ENCODE measurements at regions of chr22 and their contacts with region 1.

Region 1: GRCh38 chr22:22201185-22201929 is 43.2 kb upstream of the VPREB1 start:
- DNase-seq: peak; percentile 86
- ATAC-seq: peak; percentile 77
- H3K4me3 Mint-ChIP-seq: no peak overlapping the region
- H3K27ac Mint-ChIP-seq: no peak overlapping the region
- H3K4me1 Mint-ChIP-seq: no peaks in the 10 kb centered on the region
- H3K27me3 Mint-ChIP-seq: peaks cover 2% of the 10 kb centered on the region

Region 2: GRCh38 chr22:21972293-21972779 is 229.0 kb before region 1 on chr22:
- CTCF ChIA-PET with region 1: no interaction called
- POLR2A ChIA-PET with region 1: no interaction called
- intact Hi-C with region 1: no loop called
- DNase-seq: peak; percentile 72
- ATAC-seq: peak; percentile 63
- H3K4me3 Mint-ChIP-seq: no peak overlapping the region
- H3K27ac Mint-ChIP-seq: no peak overlapping the region
- H3K4me1 Mint-ChIP-seq: no peaks in the 10 kb centered on the region
- H3K27me3 Mint-ChIP-seq: no peaks in the 10 kb centered on the region

Region 3: DNA sequence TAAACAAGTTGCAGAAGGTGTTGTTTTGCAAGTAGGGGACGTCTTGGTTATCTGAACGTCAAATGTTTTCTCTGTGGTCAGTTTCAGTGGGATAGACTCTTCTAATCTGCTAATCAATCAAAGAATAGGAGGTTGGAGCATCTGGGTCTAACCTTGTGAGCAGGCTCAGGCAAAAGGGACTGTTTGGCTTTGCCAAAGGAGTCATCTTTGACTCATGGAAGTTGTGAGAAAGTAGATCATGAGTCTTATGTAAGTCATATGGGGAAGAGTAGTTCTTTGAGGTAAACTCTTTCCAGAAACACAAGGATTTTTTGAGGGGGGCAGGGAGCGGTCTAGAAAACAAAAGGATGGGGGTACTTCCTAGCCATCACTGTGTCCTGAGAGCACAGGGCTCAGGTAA is 191.7 kb before region 1 on chr22:
- CTCF ChIA-PET with region 1: no interaction called
- POLR2A ChIA-PET with region 1: no interaction called
- intact Hi-C with region 1: no loop called
- DNase-seq: no peak
- ATAC-seq: peak; percentile 44
- H3K4me3 Mint-ChIP-seq: no peak overlapping the region
- H3K27ac Mint-ChIP-seq: no peak overlapping the region
- H3K4me1 Mint-ChIP-seq: peaks cover 3% of the 10 kb centered on the region
- H3K27me3 Mint-ChIP-seq: peaks cover 19% of the 10 kb centered on the region

Region 4: DNA sequence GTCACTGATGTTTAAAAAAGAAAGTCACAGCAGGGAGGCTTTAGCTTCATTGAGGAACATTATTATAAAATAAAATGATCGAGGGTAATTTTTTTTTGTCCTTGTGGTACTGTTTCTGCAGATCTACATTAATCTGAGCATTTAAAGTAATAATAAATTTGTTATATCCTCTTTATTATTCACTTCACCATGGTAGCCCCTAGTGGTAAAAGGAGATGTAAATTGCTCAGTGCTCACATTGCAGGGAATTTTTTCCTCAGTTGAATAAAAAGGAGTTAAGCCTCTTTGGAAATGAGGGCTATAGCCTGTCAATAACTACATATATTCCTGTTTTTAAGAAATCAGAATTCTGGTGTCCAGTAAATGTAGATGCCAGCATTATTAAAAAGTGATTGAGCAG is 56.5 kb before region 1 on chr22:
- CTCF ChIA-PET with region 1: no interaction called
- POLR2A ChIA-PET with region 1: no interaction called
- intact Hi-C with region 1: no loop called
- DNase-seq: no peak
- ATAC-seq: no peak
- H3K4me3 Mint-ChIP-seq: no peak overlapping the region
- H3K27ac Mint-ChIP-seq: no peak overlapping the region
- H3K4me1 Mint-ChIP-seq: no peaks in the 10 kb centered on the region
- H3K27me3 Mint-ChIP-seq: peaks cover 40% of the 10 kb centered on the region

Region 5: DNA sequence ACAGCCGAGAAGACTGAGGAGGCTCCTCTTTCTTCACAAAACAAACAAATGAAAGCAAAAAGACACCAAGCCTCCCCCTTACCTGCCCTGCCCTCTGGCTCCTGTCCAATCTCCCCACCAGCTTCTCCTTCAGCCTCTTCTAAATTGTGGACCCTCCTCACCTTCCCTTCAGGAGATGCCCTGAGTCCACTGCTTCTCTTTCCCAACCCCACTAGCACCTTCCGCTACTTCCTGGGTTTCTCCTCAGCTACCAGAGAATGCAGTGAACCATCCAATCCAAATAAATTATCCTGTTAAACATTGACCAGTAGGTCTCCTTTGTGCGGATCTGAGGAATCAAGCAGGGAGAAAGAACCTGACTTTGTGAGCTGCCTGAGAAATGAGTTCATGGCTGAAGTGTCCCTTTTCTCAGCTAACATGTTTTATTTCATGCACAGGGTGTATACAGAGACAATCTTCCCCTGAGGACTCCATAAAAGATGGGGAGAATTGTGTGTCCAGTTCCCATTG is 20.0 kb before region 1 on chr22:
- CTCF ChIA-PET with region 1: interaction called, 55 read pairs
- POLR2A ChIA-PET with region 1: no interaction called
- intact Hi-C with region 1: no loop called
- DNase-seq: no peak
- ATAC-seq: no peak
- H3K4me3 Mint-ChIP-seq: no peak overlapping the region
- H3K27ac Mint-ChIP-seq: no peak overlapping the region
- H3K4me1 Mint-ChIP-seq: no peaks in the 10 kb centered on the region
- H3K27me3 Mint-ChIP-seq: peaks cover 29% of the 10 kb centered on the region

Region 6: GRCh38 chr22:22219140-22219996 is 18.0 kb after region 1 on chr22:
- CTCF ChIA-PET with region 1: interaction called, 13 read pairs
- POLR2A ChIA-PET with region 1: no interaction called
- intact Hi-C with region 1: no loop called
- DNase-seq: no peak
- ATAC-seq: no peak
- H3K4me3 Mint-ChIP-seq: no peak overlapping the region
- H3K27ac Mint-ChIP-seq: no peak overlapping the region
- H3K4me1 Mint-ChIP-seq: peaks cover 7% of the 10 kb centered on the region
- H3K27me3 Mint-ChIP-seq: no peaks in the 10 kb centered on the region

Region 7: GRCh38 chr22:23404732-23405365 is 1203.5 kb after region 1 on chr22:
- CTCF ChIA-PET with region 1: no interaction called
- POLR2A ChIA-PET with region 1: no interaction called
- intact Hi-C with region 1: no loop called
- DNase-seq: peak; percentile 41
- ATAC-seq: no peak
- H3K4me3 Mint-ChIP-seq: no peak overlapping the region
- H3K27ac Mint-ChIP-seq: no peak overlapping the region
- H3K4me1 Mint-ChIP-seq: no peaks in the 10 kb centered on the region
- H3K27me3 Mint-ChIP-seq: no peaks in the 10 kb centered on the region